ENCODE measurements at regions of chr2 and their contacts with region 1.

Region 1: DNA sequence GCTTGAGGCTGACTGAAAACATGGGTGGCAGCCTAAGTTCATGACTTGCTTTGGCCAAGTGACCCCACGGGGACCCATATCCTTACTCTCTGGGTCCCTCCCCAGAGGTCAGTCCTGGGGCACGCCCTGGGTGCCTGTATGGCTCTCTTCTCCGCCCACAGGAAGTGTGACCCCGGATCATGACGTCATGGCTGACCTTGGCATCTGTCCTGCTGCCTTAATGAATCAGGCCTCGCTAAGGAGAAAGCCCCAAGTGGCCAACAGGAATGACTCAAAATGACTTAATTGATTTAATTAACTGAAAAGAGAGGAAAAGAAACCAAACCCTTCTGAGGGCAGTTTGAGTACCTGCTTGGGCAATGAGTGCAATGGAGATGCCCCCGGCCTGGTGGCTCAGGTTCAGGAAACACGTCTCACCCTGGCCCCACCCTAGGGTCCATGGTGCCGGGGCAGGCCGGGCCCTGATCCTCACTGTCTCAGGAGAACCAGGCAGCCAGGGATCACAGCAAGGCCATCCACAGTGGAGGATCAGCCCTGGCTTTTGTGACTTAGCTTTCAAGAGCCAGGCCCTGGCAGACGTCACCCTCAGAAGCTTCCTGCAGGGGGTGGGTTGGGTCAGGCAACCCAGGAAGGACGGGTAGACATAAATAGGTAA is 112.0 kb downstream of the CYP26B1 start:
- DNase-seq: peak; percentile 61
- H3K4me3 ChIP-seq: no peak overlapping the region
- H3K27ac ChIP-seq: no peak overlapping the region
- H3K4me1 ChIP-seq: peaks cover 44% of the 10 kb centered on the region
- H3K27me3 ChIP-seq: no peaks in the 10 kb centered on the region
- CTCF ChIP-seq: no peak

Region 2: GRCh38 chr2:71962911-71963694 is 72.5 kb before region 1 on chr2:
- CTCF ChIA-PET with region 1: no interaction called
- dilution Hi-C with region 1: no loop called
- in situ Hi-C with region 1: no loop called
- intact Hi-C with region 1: no loop called
- DNase-seq: peak; percentile 21
- H3K4me3 ChIP-seq: no peak overlapping the region
- H3K27ac ChIP-seq: no peak overlapping the region
- H3K4me1 ChIP-seq: no peaks in the 10 kb centered on the region
- H3K27me3 ChIP-seq: no peaks in the 10 kb centered on the region
- CTCF ChIP-seq: no peak

Region 3: DNA sequence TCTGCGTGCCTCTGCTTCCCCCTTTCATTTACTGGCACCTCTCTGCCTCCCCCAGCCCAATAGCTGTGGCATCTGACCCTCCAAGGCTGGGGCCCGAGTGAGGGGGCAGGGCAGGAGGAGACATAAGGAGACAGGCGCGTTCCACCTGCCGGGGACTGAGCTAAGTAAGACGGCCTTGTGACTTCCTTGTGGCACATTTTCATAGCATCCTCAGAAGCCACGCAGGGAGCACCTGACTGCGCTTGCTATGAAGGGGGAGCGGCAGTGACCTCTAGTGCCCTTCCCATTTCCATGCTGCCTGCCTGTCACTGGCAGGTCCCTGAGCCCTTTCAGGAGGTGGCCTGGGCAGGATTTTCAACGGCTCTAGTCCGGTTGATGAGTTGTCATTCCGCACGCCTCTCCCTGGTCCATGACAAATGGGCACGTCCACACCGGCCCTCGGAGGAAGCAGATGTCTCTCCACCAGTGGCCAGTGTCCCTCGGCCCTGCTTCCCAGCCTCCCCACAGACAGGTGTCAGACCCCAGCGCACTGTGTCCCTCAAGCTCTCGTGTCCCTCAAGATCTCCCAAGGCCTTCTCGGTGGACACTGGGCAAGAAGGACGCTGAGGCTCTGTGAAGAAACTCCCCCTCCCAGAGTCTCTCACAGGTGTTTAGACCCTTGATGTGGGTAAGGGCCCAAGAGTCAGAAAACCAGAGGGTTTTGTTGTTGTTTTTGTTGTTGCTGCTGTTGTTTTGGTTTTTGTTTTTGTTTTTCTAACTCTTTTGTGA is 69.4 kb after region 1 on chr2:
- CTCF ChIA-PET with region 1: no interaction called
- dilution Hi-C with region 1: no loop called
- in situ Hi-C with region 1: no loop called
- intact Hi-C with region 1: no loop called
- DNase-seq: no peak
- H3K4me3 ChIP-seq: no peak overlapping the region
- H3K27ac ChIP-seq: no peak overlapping the region
- H3K4me1 ChIP-seq: peaks cover 15% of the 10 kb centered on the region
- H3K27me3 ChIP-seq: no peaks in the 10 kb centered on the region
- CTCF ChIP-seq: no peak

Region 4: GRCh38 chr2:72124376-72124775 is 88.7 kb after region 1 on chr2:
- CTCF ChIA-PET with region 1: no interaction called
- dilution Hi-C with region 1: loop called (anchors 5 kb)
- in situ Hi-C with region 1: no loop called
- intact Hi-C with region 1: no loop called
- DNase-seq: no peak
- H3K4me3 ChIP-seq: no peak overlapping the region
- H3K27ac ChIP-seq: no peak overlapping the region
- H3K4me1 ChIP-seq: no peaks in the 10 kb centered on the region
- H3K27me3 ChIP-seq: no peaks in the 10 kb centered on the region
- CTCF ChIP-seq: no peak

Region 5: GRCh38 chr2:72293620-72294019 is 258.0 kb after region 1 on chr2:
- CTCF ChIA-PET with region 1: no interaction called
- dilution Hi-C with region 1: no loop called
- in situ Hi-C with region 1: no loop called
- intact Hi-C with region 1: no loop called
- DNase-seq: no peak
- H3K4me3 ChIP-seq: no peak overlapping the region
- H3K27ac ChIP-seq: no peak overlapping the region
- H3K4me1 ChIP-seq: no peaks in the 10 kb centered on the region
- H3K27me3 ChIP-seq: no peaks in the 10 kb centered on the region
- CTCF ChIP-seq: no peak

Measured in mammary epithelial cell (primary cell).